Caco-2 (cell line): ENCODE measurements at regions of chr1 and their contacts with region 1.

Region 1: DNA sequence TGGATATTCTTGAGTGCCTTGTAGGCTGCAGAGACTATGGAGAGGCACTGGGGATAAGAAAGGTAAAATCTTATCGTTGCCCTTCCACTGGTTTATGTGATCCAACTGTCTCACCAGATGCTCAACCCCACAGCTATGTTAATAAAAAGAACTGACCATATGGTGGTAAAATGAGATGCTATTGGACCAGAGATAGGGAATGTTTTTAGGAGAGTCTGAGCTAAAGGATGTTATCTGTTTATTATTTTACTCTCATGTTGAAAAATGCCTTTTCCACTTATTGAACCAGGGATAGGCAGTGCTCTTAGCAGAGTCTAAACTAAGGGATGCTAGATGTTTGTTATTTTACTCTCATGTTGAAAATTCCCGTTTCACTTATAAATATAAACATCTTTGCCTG is 172.8 kb upstream of the GREM2 start:
- DNase-seq: no peak
- H3K4me3 ChIP-seq: no peak overlapping the region
- H3K4me3 Mint-ChIP-seq: peak overlapping the region; percentile 10
- H3K27ac Mint-ChIP-seq: peak overlapping the region; percentile 95
- H3K4me1 ChIP-seq: peaks cover 43% of the 10 kb centered on the region
- H3K4me1 Mint-ChIP-seq: peaks cover 18% of the 10 kb centered on the region
- H3K27me3 ChIP-seq: no peaks in the 10 kb centered on the region
- H3K27me3 Mint-ChIP-seq: no peaks in the 10 kb centered on the region
- CTCF ChIP-seq: no peak

Region 2: DNA sequence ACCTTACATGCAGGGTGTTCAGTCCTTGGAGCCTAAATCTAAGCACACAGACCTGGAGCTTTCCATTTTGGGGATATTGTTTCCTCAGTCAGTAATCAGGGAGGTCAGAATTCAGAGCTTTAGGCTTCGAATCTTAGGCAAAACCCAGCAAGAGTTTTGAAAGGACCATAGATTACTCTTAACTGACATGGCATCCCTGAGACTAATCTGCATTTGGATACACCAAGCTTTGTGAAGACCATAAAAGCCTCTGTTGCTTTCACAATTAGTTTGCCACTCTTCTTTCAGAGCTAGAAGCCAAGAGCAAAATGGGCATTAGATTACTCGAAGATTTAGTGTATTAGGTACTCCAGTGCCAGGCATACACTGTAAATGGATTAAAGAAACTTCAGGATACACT is 41.1 kb before region 1 on chr1:
- CTCF ChIA-PET with region 1: no interaction called
- POLR2A ChIA-PET with region 1: no interaction called
- intact Hi-C with region 1: loop called (anchors 1 kb)
- DNase-seq: no peak
- H3K4me3 ChIP-seq: no peak overlapping the region
- H3K4me3 Mint-ChIP-seq: no peak overlapping the region
- H3K27ac Mint-ChIP-seq: no peak overlapping the region
- H3K4me1 ChIP-seq: peaks cover 5% of the 10 kb centered on the region; the same call in 1 of the 2 replicates
- H3K4me1 Mint-ChIP-seq: no peaks in the 10 kb centered on the region
- H3K27me3 ChIP-seq: no peaks in the 10 kb centered on the region
- H3K27me3 Mint-ChIP-seq: no peaks in the 10 kb centered on the region
- CTCF ChIP-seq: no peak

Region 3: DNA sequence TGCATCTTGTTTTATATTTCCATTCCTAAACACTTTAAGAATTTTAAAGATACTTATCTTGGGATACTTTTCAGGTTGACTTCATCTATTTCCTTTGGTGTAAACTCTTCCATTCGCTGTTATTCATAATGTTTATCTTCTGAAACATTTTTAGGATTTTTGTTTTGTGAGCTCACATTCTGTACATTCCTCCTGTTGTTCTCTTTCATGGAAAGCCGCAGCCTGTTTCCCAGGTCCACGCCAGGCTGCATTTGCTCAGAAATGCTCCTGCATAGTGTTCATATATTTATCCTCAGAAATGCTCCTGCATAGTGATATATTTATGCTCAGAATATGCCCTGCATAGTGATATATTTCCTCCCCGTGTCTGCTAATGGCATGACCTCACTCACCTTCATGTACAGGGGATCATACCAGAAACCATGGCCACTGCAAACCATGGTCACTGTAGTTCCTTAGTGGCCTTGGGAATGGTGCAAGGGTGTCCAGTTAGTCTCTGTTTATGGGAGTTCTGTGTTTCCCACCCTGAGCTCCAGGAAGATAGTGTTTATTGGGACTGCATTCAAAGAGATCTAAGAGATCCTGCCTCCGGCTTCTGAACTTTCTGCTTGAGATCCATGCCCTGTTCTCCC is 18.9 kb before region 1 on chr1:
- CTCF ChIA-PET with region 1: no interaction called
- POLR2A ChIA-PET with region 1: interaction called, 3 read pairs
- intact Hi-C with region 1: loop called (anchors 1 kb)
- DNase-seq: peak; percentile 55 to 56
- H3K4me3 ChIP-seq: no peak overlapping the region
- H3K4me3 Mint-ChIP-seq: peak overlapping the region; percentile 43
- H3K27ac Mint-ChIP-seq: peak overlapping the region; percentile 96
- H3K4me1 ChIP-seq: peaks cover 21% of the 10 kb centered on the region
- H3K4me1 Mint-ChIP-seq: peaks cover 17% of the 10 kb centered on the region
- H3K27me3 ChIP-seq: no peaks in the 10 kb centered on the region
- H3K27me3 Mint-ChIP-seq: no peaks in the 10 kb centered on the region
- CTCF ChIP-seq: no peak

Region 4: DNA sequence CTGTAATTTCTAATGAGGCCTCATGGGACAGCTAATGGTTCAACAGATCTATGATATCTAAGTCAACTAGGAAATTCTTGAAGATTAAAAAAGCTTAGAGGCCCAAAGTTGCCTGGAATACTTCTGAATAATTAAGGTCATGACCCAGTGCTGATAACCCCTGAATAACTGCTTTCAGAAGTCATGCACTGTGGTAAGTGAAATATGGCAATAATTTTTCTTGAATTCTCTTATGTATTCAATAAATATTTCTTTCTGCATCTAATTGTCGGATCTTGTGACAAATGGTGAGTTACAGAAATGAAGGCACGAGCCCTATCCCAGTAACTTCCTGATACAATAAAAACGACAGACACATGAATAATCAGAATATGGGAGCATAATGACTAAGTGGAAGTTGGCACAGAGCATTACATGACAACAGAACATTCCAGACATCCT is 46.4 kb after region 1 on chr1:
- CTCF ChIA-PET with region 1: interaction called, 4 read pairs
- POLR2A ChIA-PET with region 1: no interaction called
- intact Hi-C with region 1: loop called (anchors 1 kb)
- DNase-seq: peak in 1 of 2 experiments; percentile 8
- H3K4me3 ChIP-seq: no peak overlapping the region
- H3K4me3 Mint-ChIP-seq: no peak overlapping the region
- H3K27ac Mint-ChIP-seq: no peak overlapping the region
- H3K4me1 ChIP-seq: peaks cover 17% of the 10 kb centered on the region
- H3K4me1 Mint-ChIP-seq: peaks cover 7% of the 10 kb centered on the region
- H3K27me3 ChIP-seq: no peaks in the 10 kb centered on the region
- H3K27me3 Mint-ChIP-seq: no peaks in the 10 kb centered on the region
- CTCF ChIP-seq: no peak

Region 5: GRCh38 chr1:241219449-241219848 is 434.7 kb after region 1 on chr1:
- CTCF ChIA-PET with region 1: no interaction called
- POLR2A ChIA-PET with region 1: no interaction called
- intact Hi-C with region 1: loop called (anchors 1 kb)
- DNase-seq: peak; percentile 52 to 79
- H3K4me3 ChIP-seq: no peak overlapping the region
- H3K4me3 Mint-ChIP-seq: peak overlapping the region; percentile 59
- H3K27ac Mint-ChIP-seq: peak overlapping the region; percentile 98
- H3K4me1 ChIP-seq: peaks cover 35% of the 10 kb centered on the region
- H3K4me1 Mint-ChIP-seq: peaks cover 33% of the 10 kb centered on the region
- H3K27me3 ChIP-seq: no peaks in the 10 kb centered on the region
- H3K27me3 Mint-ChIP-seq: no peaks in the 10 kb centered on the region
- CTCF ChIP-seq: no peak